Calu3 (cell line): ENCODE measurements at regions of chr1 and their contacts with region 1.

Region 1: GRCh38 chr1:241531195-241532161 is 700 bp upstream of the KMO start:
- DNase-seq: no peak
- H3K4me3 Mint-ChIP-seq: peak overlapping the region; percentile 72
- H3K27ac Mint-ChIP-seq: peak overlapping the region; percentile 78
- H3K4me1 Mint-ChIP-seq: peaks cover 26% of the 10 kb centered on the region
- H3K27me3 Mint-ChIP-seq: no peaks in the 10 kb centered on the region
- CTCF ChIP-seq: peak; percentile 41

Region 2: DNA sequence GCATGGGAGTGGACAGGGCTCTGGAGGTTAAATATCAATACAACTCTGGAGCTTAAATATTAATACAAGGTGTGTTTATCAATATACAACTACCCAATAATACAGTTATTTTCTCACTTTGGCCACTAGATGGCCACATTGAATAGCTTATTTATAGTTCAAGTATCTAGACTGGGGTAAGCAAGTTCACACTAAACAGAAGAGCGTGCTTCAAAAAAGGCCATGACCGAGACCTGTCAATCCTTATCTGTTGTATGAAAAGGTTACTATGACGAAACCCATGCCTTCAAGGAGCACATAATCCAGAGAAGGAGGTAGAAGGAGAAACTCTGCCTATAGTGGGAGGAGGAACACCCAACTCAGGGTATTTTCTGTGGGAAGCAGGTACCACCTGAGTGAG is 79.6 kb after region 1 on chr1:
- CTCF ChIA-PET with region 1: interaction called, 12 read pairs
- intact Hi-C with region 1: loop called (anchors 5 kb)
- DNase-seq: peak; percentile 31
- H3K4me3 Mint-ChIP-seq: no peak overlapping the region
- H3K27ac Mint-ChIP-seq: no peak overlapping the region
- H3K4me1 Mint-ChIP-seq: peaks cover 31% of the 10 kb centered on the region
- H3K27me3 Mint-ChIP-seq: no peaks in the 10 kb centered on the region
- CTCF ChIP-seq: peak; percentile 38

Region 3: GRCh38 chr1:241627453-241628259 is 96.2 kb after region 1 on chr1:
- CTCF ChIA-PET with region 1: no interaction called
- intact Hi-C with region 1: loop called (anchors 1 kb)
- DNase-seq: peak; percentile 67
- H3K4me3 Mint-ChIP-seq: no peak overlapping the region
- H3K27ac Mint-ChIP-seq: no peak overlapping the region
- H3K4me1 Mint-ChIP-seq: peaks cover 37% of the 10 kb centered on the region
- H3K27me3 Mint-ChIP-seq: no peaks in the 10 kb centered on the region
- CTCF ChIP-seq: peak; percentile 75

Region 4: DNA sequence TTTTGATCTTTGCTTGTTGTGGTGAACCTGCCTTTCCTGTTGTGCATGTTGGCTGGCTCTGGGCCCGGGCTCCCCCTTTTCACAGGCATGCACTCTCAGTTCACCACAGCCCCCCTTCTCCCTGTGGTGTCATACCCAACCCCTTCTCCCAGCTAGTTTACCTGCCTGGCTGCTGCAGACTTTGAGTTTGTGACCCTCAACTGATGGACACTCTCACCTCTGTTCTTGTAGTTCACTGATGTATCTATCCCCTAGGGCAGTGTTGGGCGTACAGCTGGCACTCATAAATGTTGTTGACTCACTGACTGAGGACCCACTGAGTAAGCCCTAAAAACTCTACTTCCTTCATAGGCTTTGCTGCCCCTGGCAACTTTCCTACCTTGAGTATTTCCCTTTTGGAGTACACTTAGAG is 175.5 kb after region 1 on chr1:
- CTCF ChIA-PET with region 1: no interaction called
- intact Hi-C with region 1: loop called (anchors 5 kb)
- DNase-seq: peak; percentile 64
- H3K4me3 Mint-ChIP-seq: peak overlapping the region; percentile 48
- H3K27ac Mint-ChIP-seq: peak overlapping the region; percentile 72
- H3K4me1 Mint-ChIP-seq: peaks cover 15% of the 10 kb centered on the region
- H3K27me3 Mint-ChIP-seq: no peaks in the 10 kb centered on the region
- CTCF ChIP-seq: no peak

Region 5: GRCh38 chr1:241834733-241835377 is 303.4 kb after region 1 on chr1:
- CTCF ChIA-PET with region 1: interaction called, 5 read pairs
- intact Hi-C with region 1: loop called (anchors 1 kb)
- DNase-seq: peak; percentile 16
- H3K4me3 Mint-ChIP-seq: no peak overlapping the region
- H3K27ac Mint-ChIP-seq: no peak overlapping the region
- H3K4me1 Mint-ChIP-seq: peaks cover 8% of the 10 kb centered on the region
- H3K27me3 Mint-ChIP-seq: no peaks in the 10 kb centered on the region
- CTCF ChIP-seq: peak; percentile 37

Region 6: DNA sequence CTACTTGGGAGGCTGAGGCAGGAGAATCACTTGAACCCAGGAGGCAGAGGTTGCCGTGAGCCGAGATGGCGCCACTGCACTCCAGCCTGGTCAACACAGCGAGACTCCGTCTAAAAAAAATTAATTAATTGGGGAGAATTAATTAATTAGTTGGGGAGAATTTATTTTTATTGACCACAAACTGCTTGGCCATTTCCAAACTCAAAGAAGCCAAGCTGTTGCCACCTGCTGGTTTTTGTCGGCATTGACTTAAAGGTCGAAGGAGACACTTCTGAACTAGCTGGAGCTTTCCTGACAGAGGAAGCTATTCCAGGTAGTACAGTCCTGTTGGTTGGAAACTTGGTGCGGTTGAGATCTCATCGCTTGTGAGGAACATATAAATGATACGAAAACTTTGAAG is 454.3 kb after region 1 on chr1:
- CTCF ChIA-PET with region 1: no interaction called
- intact Hi-C with region 1: loop called (anchors 5 kb)
- DNase-seq: peak; percentile 60
- H3K4me3 Mint-ChIP-seq: no peak overlapping the region
- H3K27ac Mint-ChIP-seq: no peak overlapping the region
- H3K4me1 Mint-ChIP-seq: peaks cover 13% of the 10 kb centered on the region
- H3K27me3 Mint-ChIP-seq: no peaks in the 10 kb centered on the region
- CTCF ChIP-seq: peak; percentile 58

Region 7: GRCh38 chr1:242017584-242018233 is 486.2 kb after region 1 on chr1:
- CTCF ChIA-PET with region 1: no interaction called
- intact Hi-C with region 1: loop called (anchors 10 kb)
- DNase-seq: peak; percentile 64
- H3K4me3 Mint-ChIP-seq: no peak overlapping the region
- H3K27ac Mint-ChIP-seq: no peak overlapping the region
- H3K4me1 Mint-ChIP-seq: no peaks in the 10 kb centered on the region
- H3K27me3 Mint-ChIP-seq: no peaks in the 10 kb centered on the region
- CTCF ChIP-seq: peak; percentile 71